HCT116 (cell line): ENCODE measurements at regions of chr1 and their contacts with region 1.

Region 1: GRCh38 chr1:201042779-201043461 is 19.4 kb upstream of the KIF21B start:
- DNase-seq: peak; percentile 65
- ATAC-seq: peak; percentile 96
- H3K4me3 ChIP-seq: no peak overlapping the region
- H3K27ac ChIP-seq: no peak overlapping the region
- H3K4me1 ChIP-seq: peaks cover 0 to 3% of the 10 kb centered on the region in 2 experiments; a peak in 1 of 4 replicates
- H3K27me3 ChIP-seq: no peaks in the 10 kb centered on the region
- CTCF ChIP-seq: peak; percentile 84 to 96 (median 88)
- POLR2A ChIP-seq: no peak
- RAD21 ChIP-seq: peak; percentile 96

Region 2: DNA sequence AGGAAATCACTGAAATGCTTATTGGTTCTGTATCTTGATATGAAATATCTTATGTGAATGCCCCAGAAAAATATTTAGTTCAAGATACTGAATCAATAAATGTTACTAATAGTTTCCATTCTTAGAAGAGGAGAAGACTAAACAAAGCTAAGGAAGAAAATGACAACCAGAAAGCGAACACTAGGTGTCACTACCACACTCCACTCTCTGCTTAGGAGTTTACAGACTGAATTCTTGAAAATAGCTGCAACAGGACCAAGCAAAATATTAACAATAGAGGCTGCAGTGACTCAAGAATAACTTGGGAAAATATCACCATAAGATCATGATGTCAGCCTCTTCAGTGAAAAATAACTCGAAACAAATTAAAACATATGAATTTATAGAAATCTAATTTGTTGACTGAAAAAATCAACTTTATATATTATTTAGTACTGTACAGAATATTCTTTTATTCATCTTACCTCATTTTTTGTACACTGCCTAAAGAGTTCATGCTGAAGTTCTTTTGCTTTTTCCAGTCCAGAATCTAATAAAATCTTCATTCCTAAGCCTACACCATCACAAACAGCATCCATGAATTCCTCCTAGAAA is 484.0 kb before region 1 on chr1:
- CTCF ChIA-PET with region 1: interaction called, 3 read pairs
- POLR2A ChIA-PET with region 1: no interaction called
- RAD21 ChIA-PET with region 1: no interaction called
- intact Hi-C with region 1: loop called (anchors 10 kb)
- DNase-seq: peak; percentile 51
- ATAC-seq: peak; percentile 81
- H3K4me3 ChIP-seq: no peak overlapping the region
- H3K27ac ChIP-seq: no peak overlapping the region
- H3K4me1 ChIP-seq: no peaks in the 10 kb centered on the region
- H3K27me3 ChIP-seq: no peaks in the 10 kb centered on the region
- CTCF ChIP-seq: peak; percentile 64 to 80 (median 75)
- POLR2A ChIP-seq: no peak
- RAD21 ChIP-seq: peak; percentile 78

Region 3: DNA sequence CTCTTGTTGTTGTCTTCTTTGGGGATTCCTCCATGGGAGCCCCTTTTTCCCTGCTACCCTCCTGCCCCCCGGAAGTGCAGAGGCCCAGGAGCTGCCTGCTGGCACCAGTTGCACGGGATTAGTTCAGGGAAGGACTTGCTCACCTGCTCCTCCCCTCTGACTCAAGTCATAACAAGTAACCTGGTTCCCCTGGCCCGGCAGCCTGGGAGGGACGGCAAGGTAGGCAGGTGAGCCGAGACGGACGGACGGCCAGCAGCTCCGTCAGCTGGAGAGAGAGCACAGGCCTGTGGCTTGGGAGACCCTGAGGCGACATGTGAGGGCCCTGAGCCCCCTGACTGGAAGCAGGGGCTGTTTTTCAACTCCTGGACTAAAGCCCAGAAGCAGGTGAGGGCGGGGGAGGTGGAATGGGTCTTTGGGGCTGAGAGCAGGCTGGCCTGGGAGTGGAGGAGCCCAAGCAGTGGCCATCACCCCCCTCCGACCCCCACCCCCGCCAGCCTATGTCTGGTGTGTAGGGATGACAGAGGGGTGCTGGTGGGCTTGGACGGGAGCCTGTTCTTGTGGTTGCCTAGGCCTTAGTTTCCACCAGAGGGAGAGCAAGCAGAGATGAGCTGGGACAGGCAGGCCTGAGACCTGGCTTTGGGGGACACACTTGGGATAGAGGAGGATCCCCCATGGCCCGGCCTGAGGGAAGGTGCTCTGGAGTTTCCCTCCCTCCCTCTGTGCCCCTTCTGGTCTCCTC is 148.0 kb before region 1 on chr1 and contains the start of gene INAVA:
- CTCF ChIA-PET with region 1: no interaction called
- POLR2A ChIA-PET with region 1: no interaction called
- RAD21 ChIA-PET with region 1: no interaction called
- intact Hi-C with region 1: loop called (anchors 1 kb)
- DNase-seq: peak; percentile 53
- ATAC-seq: peak; percentile 61
- H3K4me3 ChIP-seq: peak within 1 kb of the TSS; percentile 63
- H3K27ac ChIP-seq: peak within 1 kb of the TSS; percentile 26
- H3K4me1 ChIP-seq: peaks cover 47 to 77% of the 10 kb centered on the region in 2 experiments
- H3K27me3 ChIP-seq: no peaks in the 10 kb centered on the region
- CTCF ChIP-seq: peak in 2 of 3 experiments; percentile 36 to 38; a peak in 4 of 6 replicates
- POLR2A ChIP-seq: no peak
- RAD21 ChIP-seq: no peak
- total RNA-seq, gene INAVA: 18.8 TPM

Region 4: DNA sequence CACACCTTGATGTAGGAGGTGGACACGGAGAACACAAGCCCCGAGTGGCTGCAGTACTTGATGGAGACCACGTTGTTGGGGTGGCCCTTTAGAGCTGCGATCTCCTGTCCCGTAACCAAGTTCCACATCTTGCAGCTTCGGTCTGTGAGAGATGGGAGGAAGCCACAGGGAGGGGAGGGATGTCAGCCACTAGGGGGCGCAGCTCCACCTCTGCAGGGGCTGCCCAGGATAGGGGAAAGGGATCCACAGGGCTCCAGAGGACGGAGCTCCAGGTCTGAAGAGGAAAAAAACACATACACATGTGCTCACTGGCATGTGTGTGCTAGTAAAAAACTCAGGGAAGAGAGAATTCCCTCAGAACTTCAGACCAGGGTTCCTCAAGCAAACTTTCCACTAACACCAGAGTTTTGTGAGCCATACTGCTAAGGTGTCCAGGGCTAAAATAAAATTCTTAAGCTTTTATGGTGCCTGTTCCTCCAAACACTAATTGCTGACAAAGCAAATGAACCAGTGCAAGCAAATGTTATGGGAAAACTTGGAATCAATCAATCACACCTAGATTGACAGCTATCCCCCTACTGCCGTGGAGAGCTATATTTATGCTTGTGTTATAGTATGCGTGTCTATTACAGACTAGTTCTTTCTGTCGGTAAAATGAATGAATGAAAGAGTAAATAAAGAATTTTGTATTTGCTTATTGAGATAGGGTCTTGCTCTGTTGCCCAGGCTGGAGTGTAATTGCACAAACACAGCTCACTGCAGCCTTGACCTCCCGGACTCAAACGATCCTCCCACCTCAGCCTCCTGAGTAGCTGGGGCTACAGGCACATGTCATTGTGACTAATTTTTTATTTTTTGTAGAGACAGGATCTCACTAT is 63.1 kb before region 1 on chr1:
- CTCF ChIA-PET with region 1: interaction called, 15 read pairs
- POLR2A ChIA-PET with region 1: no interaction called
- RAD21 ChIA-PET with region 1: interaction called in 1 of 2 experiments, 3 read pairs
- intact Hi-C with region 1: no loop called
- DNase-seq: peak; percentile 12
- ATAC-seq: peak; percentile 94
- H3K4me3 ChIP-seq: no peak overlapping the region
- H3K27ac ChIP-seq: no peak overlapping the region
- H3K4me1 ChIP-seq: no peaks in the 10 kb centered on the region
- H3K27me3 ChIP-seq: no peaks in the 10 kb centered on the region
- CTCF ChIP-seq: peak; percentile 69 to 90 (median 89); a peak in 5 of 6 replicates
- POLR2A ChIP-seq: no peak
- RAD21 ChIP-seq: peak; percentile 84

Region 5: GRCh38 chr1:201191653-201192260 is 148.8 kb after region 1 on chr1:
- CTCF ChIA-PET with region 1: no interaction called
- POLR2A ChIA-PET with region 1: no interaction called
- RAD21 ChIA-PET with region 1: no interaction called
- intact Hi-C with region 1: no loop called
- DNase-seq: peak; percentile 32
- ATAC-seq: peak; percentile 73; the same call in 1 of the 2 replicates
- H3K4me3 ChIP-seq: no peak overlapping the region
- H3K27ac ChIP-seq: no peak overlapping the region
- H3K4me1 ChIP-seq: peaks cover 0 to 15% of the 10 kb centered on the region in 2 experiments; a peak in 2 of 4 replicates
- H3K27me3 ChIP-seq: peaks cover 6% of the 10 kb centered on the region; the same call in 1 of the 2 replicates
- CTCF ChIP-seq: no peak
- POLR2A ChIP-seq: no peak
- RAD21 ChIP-seq: no peak